CD4-positive, alpha-beta memory T cell (primary cell): ENCODE measurements at regions of chr12 and their contacts with region 1.

Region 1: GRCh38 chr12:21697904-21698630 is 40.4 kb upstream of the LDHB start:
- DNase-seq: peak in 4 of 5 donors; percentile 43 to 46 (median 44)
- H3K4me3 ChIP-seq: no peak overlapping the region
- H3K4me3 Mint-ChIP-seq: peak overlapping the region in 6 of 8 donors; percentile 19 to 68 (median 27)
- H3K27ac ChIP-seq: no peak overlapping the region
- H3K27ac Mint-ChIP-seq: no peak overlapping the region
- H3K4me1 ChIP-seq: peaks cover 11% of the 10 kb centered on the region
- H3K4me1 Mint-ChIP-seq: peaks cover 0 to 16% (median 10%) of the 10 kb centered on the region in 4 donors
- H3K27me3 ChIP-seq: no peaks in the 10 kb centered on the region
- H3K27me3 Mint-ChIP-seq: no peaks in the 10 kb centered on the region

Region 2: DNA sequence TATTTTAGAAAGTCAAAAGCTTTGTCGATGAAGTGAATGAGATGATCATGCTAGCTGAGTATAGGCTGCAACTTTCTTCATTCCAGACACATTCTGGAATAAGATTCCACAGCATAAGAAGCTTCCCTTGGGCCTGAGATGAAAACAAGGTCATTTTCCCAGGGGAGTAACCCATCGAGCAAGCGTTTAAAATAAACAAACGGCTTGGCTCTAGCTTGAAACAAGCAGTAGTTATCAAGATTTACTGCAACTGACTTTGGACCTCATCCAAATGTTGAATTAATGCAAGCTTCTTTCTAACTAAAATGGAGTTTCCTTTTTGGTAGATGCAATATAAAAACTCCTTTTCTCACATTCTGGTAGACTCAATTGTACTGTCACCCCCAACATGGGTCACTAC is 53.5 kb after region 1 on chr12:
- CTCF ChIA-PET with region 1: no interaction called
- POLR2A ChIA-PET with region 1: no interaction called
- intact Hi-C with region 1: no loop called
- DNase-seq: no peak
- H3K4me3 ChIP-seq: no peak overlapping the region
- H3K4me3 Mint-ChIP-seq: no peak overlapping the region
- H3K27ac ChIP-seq: no peak overlapping the region
- H3K27ac Mint-ChIP-seq: no peak overlapping the region
- H3K4me1 ChIP-seq: no peaks in the 10 kb centered on the region
- H3K4me1 Mint-ChIP-seq: no peaks in the 10 kb centered on the region
- H3K27me3 ChIP-seq: no peaks in the 10 kb centered on the region
- H3K27me3 Mint-ChIP-seq: peaks cover 16 to 22% of the 10 kb centered on the region in 2 donors

Region 3: DNA sequence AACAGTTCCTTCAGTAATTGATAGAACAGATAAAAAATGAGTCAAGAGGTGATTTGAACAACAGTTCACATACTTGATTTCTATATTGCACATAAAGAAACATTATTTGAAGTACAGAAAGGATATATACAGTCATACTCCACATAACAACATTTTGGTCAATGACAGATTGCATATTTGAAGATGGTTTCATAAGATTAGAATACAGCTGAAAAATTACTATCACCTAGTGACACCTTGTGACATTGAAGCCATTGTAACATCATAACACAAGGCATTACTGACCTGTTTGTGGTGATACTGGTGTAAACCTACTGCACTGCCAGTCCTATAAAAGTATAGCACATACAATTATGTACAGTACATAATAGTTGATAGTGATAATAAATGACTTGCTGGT is 286.3 kb after region 1 on chr12:
- CTCF ChIA-PET with region 1: interaction called, 46 read pairs
- POLR2A ChIA-PET with region 1: no interaction called
- intact Hi-C with region 1: loop called (anchors 1 kb)
- DNase-seq: no peak
- H3K4me3 ChIP-seq: no peak overlapping the region
- H3K4me3 Mint-ChIP-seq: no peak overlapping the region
- H3K27ac ChIP-seq: no peak overlapping the region
- H3K27ac Mint-ChIP-seq: no peak overlapping the region
- H3K4me1 ChIP-seq: no peaks in the 10 kb centered on the region
- H3K4me1 Mint-ChIP-seq: peaks cover 0 to 1% (median under 1%) of the 10 kb centered on the region in 4 donors
- H3K27me3 ChIP-seq: no peaks in the 10 kb centered on the region
- H3K27me3 Mint-ChIP-seq: peaks cover 12% of the 10 kb centered on the region in 2 donors

Region 4: DNA sequence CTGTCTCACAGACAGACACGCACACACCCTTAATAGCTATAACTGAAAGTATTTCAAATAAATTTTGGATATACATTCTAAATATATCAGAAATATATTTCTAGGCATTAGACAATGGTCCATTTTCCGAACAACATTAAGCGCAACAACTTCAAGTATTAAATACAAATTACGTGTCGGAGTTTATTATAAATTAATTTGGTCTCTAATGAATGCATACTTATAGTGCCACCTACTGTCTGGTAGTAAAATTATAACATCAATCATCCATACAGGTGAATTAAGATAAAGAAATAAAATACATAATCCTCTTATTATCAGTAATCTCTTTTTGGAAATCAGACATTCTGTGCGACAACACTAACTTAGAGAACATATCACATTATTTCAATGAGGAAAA is 320.8 kb after region 1 on chr12:
- CTCF ChIA-PET with region 1: interaction called, 91 read pairs
- POLR2A ChIA-PET with region 1: interaction called, 3 read pairs
- intact Hi-C with region 1: loop called (anchors 1 kb)
- DNase-seq: peak in 4 of 5 donors; percentile 15 to 30 (median 23)
- H3K4me3 ChIP-seq: no peak overlapping the region
- H3K4me3 Mint-ChIP-seq: no peak overlapping the region
- H3K27ac ChIP-seq: no peak overlapping the region
- H3K27ac Mint-ChIP-seq: no peak overlapping the region
- H3K4me1 ChIP-seq: no peaks in the 10 kb centered on the region
- H3K4me1 Mint-ChIP-seq: no peaks in the 10 kb centered on the region
- H3K27me3 ChIP-seq: no peaks in the 10 kb centered on the region
- H3K27me3 Mint-ChIP-seq: peaks cover 3 to 10% of the 10 kb centered on the region in 2 donors

Region 5: GRCh38 chr12:22459838-22460490 is 761.9 kb after region 1 on chr12:
- CTCF ChIA-PET with region 1: interaction called, 44 read pairs
- POLR2A ChIA-PET with region 1: no interaction called
- intact Hi-C with region 1: loop called (anchors 1 kb)
- DNase-seq: peak in 4 of 5 donors; percentile 41 to 46 (median 44)
- H3K4me3 ChIP-seq: no peak overlapping the region
- H3K4me3 Mint-ChIP-seq: no peak overlapping the region
- H3K27ac ChIP-seq: no peak overlapping the region
- H3K27ac Mint-ChIP-seq: peak overlapping the region in 2 of 7 donors; percentile 5 to 38
- H3K4me1 ChIP-seq: no peaks in the 10 kb centered on the region
- H3K4me1 Mint-ChIP-seq: peaks cover 0 to 4% (median 2%) of the 10 kb centered on the region in 4 donors
- H3K27me3 ChIP-seq: no peaks in the 10 kb centered on the region
- H3K27me3 Mint-ChIP-seq: no peaks in the 10 kb centered on the region